ENCODE measurements at regions of chr2 and their contacts with region 1.

Region 1: GRCh38 chr2:10776236-10776977 is 36.2 kb downstream of the PDIA6 start:
- DNase-seq: no peak
- ATAC-seq: peak in 1 of 8 donors; percentile 5
- H3K4me3 ChIP-seq: no peak overlapping the region
- H3K27ac ChIP-seq: no peak overlapping the region
- H3K4me1 ChIP-seq: peaks cover 0 to 28% (median 17%) of the 10 kb centered on the region in 9 donors
- H3K27me3 ChIP-seq: no peaks in the 10 kb centered on the region
- CTCF ChIP-seq: no peak

Region 2: GRCh38 chr2:10740226-10740625 is 36.2 kb before region 1 on chr2:
- intact Hi-C with region 1: loop called in 1 of 10 experiments (anchors 1 kb)
- DNase-seq: no peak
- ATAC-seq: no peak
- H3K4me3 ChIP-seq: no peak overlapping the region
- H3K27ac ChIP-seq: no peak overlapping the region
- H3K4me1 ChIP-seq: no peaks in the 10 kb centered on the region
- H3K27me3 ChIP-seq: no peaks in the 10 kb centered on the region
- CTCF ChIP-seq: no peak

Region 3: DNA sequence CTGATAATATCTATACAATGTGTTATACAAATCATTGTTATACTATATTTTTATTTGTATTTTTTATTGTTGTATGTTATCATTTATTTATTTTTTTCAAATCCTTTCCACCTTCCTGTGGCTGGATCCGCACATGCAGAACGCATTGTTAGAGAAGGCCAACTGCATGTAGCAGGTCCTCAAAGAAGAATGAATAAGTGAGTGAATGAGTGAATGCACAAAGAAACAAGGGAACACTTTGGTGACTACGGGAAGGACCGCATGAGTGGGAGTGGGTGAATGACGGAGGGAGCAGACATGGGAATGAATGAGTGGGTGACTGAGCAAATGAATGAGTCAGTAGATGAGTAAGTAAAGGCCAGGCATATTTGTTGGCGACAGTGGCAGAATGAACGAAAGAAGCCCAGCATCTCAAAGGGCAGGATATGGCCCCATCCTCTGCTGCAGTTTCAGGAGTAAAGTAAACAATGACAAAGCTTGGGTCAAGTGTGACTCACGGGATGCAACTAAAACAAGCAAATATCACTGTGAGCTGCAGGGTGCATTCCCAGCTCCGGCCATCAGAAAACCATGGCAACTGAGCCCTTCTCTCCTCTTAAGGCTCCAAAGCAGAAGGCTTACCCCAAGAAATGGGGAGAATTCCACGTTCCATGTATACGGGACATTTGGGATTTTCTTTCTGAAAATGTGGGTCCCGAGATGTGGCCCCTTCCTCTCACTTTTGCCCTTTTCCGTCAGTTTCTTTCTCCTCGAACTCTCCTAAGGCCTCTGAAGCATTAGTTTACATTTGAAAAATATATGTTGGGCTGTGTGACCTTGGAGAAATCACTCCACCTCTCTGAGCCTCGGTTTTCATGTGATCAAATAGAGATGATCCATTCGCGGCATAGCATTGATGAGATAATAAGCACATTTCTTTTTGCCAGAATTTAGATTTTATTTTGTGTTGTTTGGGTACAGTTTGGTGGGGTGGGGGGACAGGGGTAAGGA is 159.8 kb after region 1 on chr2:
- intact Hi-C with region 1: no loop called
- DNase-seq: no peak
- ATAC-seq: peak in 2 of 8 donors; percentile 37 to 63
- H3K4me3 ChIP-seq: no peak overlapping the region
- H3K27ac ChIP-seq: no peak overlapping the region
- H3K4me1 ChIP-seq: peaks cover 0 to 11% (median 0%) of the 10 kb centered on the region in 9 donors
- H3K27me3 ChIP-seq: peaks cover 0 to 24% (median 0%) of the 10 kb centered on the region in 7 donors
- CTCF ChIP-seq: no peak

Measured in heart right ventricle (tissue), 16 donors.